ENCODE measurements at regions of chr12 and their contacts with region 1.

Region 1: DNA sequence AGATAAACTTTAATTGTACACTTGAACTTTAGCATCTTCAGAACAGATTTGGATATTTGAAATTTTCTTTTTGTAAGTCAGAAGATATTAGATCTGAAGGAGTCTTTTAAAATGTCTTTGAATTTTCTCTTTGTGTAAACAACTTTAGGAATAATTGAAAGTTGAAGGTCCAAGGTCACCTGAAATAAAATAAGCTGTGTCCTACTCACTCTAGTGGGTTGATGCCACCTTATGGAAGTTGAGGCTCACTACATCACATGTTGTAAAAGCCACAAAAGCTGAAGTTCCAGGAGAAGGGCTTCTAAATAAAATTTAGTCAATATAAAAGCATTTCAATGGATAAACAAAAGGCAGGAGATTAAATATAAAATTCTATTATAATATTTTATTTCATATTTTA is 122.0 kb upstream of the ATXN7L3B start:
- DNase-seq: peak; percentile 49
- ATAC-seq: peak; percentile 69
- H3K4me3 ChIP-seq: no peak overlapping the region
- H3K27ac ChIP-seq: no peak overlapping the region
- H3K4me1 ChIP-seq: peaks cover 0 to 3% of the 10 kb centered on the region in 2 experiments; a peak in 1 of 4 replicates
- H3K27me3 ChIP-seq: no peaks in the 10 kb centered on the region
- CTCF ChIP-seq: peak; percentile 60 to 67 (median 63); a peak in 5 of 6 replicates
- POLR2A ChIP-seq: no peak
- RAD21 ChIP-seq: peak; percentile 72

Region 2: DNA sequence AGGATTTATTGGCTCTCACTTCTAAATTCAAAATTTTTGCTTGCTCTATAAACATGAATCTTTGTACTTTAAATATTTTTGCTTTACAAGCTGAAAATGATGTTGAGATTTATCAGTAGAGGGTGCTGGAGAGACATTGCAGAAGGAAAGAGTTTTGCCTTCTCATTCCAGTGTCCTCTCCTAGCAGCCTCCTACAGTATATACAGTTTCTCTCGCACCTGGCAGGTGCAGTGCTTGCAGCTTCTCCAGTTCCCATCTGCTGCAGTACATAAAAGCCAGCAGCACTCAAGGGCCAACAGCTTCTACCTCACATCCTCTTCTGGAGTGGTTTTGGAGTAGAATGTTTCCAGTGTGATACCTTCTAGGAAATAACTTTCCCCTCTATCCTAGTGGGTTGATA is 479.8 kb before region 1 on chr12:
- CTCF ChIA-PET with region 1: interaction called, 20 read pairs
- POLR2A ChIA-PET with region 1: no interaction called
- RAD21 ChIA-PET with region 1: interaction called in 1 of 2 experiments, 3 read pairs
- intact Hi-C with region 1: loop called (anchors 1 kb)
- DNase-seq: peak; percentile 24
- ATAC-seq: peak; percentile 78
- H3K4me3 ChIP-seq: no peak overlapping the region
- H3K27ac ChIP-seq: no peak overlapping the region
- H3K4me1 ChIP-seq: no peaks in the 10 kb centered on the region
- H3K27me3 ChIP-seq: no peaks in the 10 kb centered on the region
- CTCF ChIP-seq: peak; percentile 37 to 54 (median 52); a peak in 4 of 6 replicates
- POLR2A ChIP-seq: no peak
- RAD21 ChIP-seq: peak; percentile 72

Region 3: DNA sequence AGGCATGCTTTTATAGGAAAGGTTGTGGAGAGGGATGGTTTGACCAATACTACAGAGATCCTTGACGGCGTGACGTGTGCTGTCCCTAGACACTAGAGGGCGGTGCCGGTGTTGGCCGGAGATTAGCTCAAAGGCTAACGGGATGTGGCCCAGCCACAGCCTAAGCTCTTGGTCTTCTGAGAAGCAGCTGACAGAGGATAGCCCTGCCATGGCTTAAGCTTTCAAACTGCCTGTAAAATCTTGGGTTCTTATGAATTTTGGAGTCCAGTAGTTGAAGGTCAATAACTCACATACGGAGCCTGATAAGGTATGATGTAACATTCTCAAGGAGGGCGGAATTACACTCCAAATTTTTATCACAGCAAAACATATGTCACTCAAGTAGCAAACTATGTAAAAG is 393.7 kb before region 1 on chr12:
- CTCF ChIA-PET with region 1: interaction called, 4 read pairs
- POLR2A ChIA-PET with region 1: no interaction called
- RAD21 ChIA-PET with region 1: interaction called in 1 of 2 experiments, 5 read pairs
- intact Hi-C with region 1: loop called (anchors 2 kb)
- DNase-seq: peak; percentile 68
- ATAC-seq: peak; percentile 100
- H3K4me3 ChIP-seq: no peak overlapping the region
- H3K27ac ChIP-seq: no peak overlapping the region
- H3K4me1 ChIP-seq: peaks cover 0 to 3% of the 10 kb centered on the region in 2 experiments; a peak in 2 of 4 replicates
- H3K27me3 ChIP-seq: no peaks in the 10 kb centered on the region
- CTCF ChIP-seq: peak; percentile 49 to 79 (median 77); a peak in 5 of 6 replicates
- POLR2A ChIP-seq: no peak
- RAD21 ChIP-seq: peak; percentile 75

Region 4: DNA sequence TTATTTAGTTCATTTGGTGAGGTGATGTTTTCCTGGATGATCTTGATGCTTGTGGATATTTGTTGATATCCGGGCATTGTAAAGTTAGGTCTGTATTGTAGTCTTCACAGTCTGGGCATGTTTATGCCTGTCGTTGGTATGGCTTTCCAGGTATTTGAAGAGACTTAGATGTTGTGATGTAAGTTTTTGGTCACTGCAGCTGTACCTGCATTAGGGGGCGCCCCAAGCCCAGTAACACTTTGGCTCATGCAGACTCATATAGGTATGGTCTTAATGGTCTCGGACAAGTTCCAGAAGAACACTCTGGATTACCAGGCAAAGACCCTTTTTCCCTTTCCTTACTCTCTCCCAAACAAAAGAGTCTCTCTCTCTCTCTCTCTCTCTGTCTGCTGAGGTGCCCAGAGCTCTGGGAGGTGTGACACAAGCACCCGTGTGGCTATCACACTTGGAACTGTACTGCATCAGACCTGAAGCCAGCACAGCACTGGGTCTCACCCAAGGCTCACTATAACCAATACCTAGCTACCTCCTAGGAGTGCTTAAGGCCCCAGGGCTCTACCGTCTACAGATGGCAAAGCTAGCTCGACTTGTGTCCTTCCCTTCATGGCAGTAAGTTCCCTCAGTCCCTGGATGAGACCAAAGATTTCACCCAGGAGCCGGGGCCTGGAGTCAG is 303.8 kb before region 1 on chr12:
- CTCF ChIA-PET with region 1: interaction called, 32 read pairs
- POLR2A ChIA-PET with region 1: no interaction called
- RAD21 ChIA-PET with region 1: interaction called in 1 of 2 experiments, 3 read pairs
- intact Hi-C with region 1: loop called (anchors 1 kb)
- DNase-seq: peak; percentile 52
- ATAC-seq: peak; percentile 97
- H3K4me3 ChIP-seq: no peak overlapping the region
- H3K27ac ChIP-seq: no peak overlapping the region
- H3K4me1 ChIP-seq: peaks cover 0 to 3% of the 10 kb centered on the region in 2 experiments; a peak in 1 of 4 replicates
- H3K27me3 ChIP-seq: no peaks in the 10 kb centered on the region
- CTCF ChIP-seq: peak; percentile 63 to 76 (median 76); a peak in 5 of 6 replicates
- POLR2A ChIP-seq: no peak
- RAD21 ChIP-seq: peak; percentile 86

Region 5: DNA sequence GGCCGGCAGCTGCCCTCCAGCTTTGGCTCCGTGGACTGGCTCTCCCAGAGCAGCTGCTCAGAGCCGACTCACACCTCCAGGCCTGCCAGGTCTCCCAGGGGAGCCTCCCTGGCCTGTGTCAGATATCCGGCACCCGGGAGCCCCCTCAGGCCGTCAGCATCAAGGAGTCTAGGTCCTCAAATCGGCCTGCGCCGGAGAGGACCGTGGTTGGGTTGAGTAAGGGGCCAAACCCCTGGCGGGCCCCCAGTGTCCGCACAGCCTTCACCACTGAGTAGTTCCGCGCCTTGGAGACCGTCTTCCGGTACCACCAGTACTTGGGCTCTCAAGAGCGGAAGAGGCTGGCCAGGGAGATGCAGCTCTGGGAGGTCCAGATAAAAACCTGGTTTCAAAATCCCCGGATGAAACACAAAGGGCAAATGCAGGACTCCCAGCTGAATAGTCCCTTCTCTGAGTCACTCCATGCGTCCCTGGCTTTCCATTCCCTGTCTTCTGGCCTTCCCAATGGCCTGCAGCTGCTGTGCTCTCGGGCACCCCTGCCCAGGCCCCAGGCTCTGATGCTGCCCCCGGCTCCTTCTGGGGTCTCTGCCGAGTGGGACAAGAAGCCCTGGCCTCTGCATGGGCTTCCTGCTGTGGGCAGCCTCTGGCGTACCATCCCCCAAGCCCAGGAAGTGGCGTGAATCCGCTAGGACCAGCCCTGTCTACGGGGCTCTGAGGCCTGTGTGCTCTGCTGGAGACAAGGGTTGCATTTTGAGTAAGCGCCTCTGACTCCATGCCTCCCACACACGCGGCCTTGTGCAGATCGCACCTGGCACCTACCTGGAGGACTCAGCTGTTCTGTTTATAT is 123.1 kb before region 1 on chr12:
- CTCF ChIA-PET with region 1: no interaction called
- POLR2A ChIA-PET with region 1: no interaction called
- RAD21 ChIA-PET with region 1: no interaction called
- intact Hi-C with region 1: no loop called
- DNase-seq: no peak
- ATAC-seq: no peak
- H3K4me3 ChIP-seq: no peak overlapping the region
- H3K27ac ChIP-seq: no peak overlapping the region
- H3K4me1 ChIP-seq: no peaks in the 10 kb centered on the region
- H3K27me3 ChIP-seq: no peaks in the 10 kb centered on the region
- CTCF ChIP-seq: no peak
- POLR2A ChIP-seq: no peak
- RAD21 ChIP-seq: no peak

Region 6: GRCh38 chr12:74483057-74483456 is 67.4 kb after region 1 on chr12:
- CTCF ChIA-PET with region 1: no interaction called
- POLR2A ChIA-PET with region 1: no interaction called
- RAD21 ChIA-PET with region 1: no interaction called
- intact Hi-C with region 1: no loop called
- DNase-seq: no peak
- ATAC-seq: no peak
- H3K4me3 ChIP-seq: no peak overlapping the region
- H3K27ac ChIP-seq: no peak overlapping the region
- H3K4me1 ChIP-seq: no peaks in the 10 kb centered on the region
- H3K27me3 ChIP-seq: no peaks in the 10 kb centered on the region
- CTCF ChIP-seq: no peak
- POLR2A ChIP-seq: no peak
- RAD21 ChIP-seq: no peak

Region 7: GRCh38 chr12:74537707-74538385 is 122.2 kb after region 1 on chr12 and contains the start of gene ATXN7L3B:
- CTCF ChIA-PET with region 1: interaction called, 3 read pairs
- POLR2A ChIA-PET with region 1: no interaction called
- RAD21 ChIA-PET with region 1: no interaction called
- intact Hi-C with region 1: loop called (anchors 5 kb)
- DNase-seq: peak; percentile 87
- ATAC-seq: peak; percentile 99
- H3K4me3 ChIP-seq: peak within 1 kb of the TSS; percentile 88 to 97
- H3K27ac ChIP-seq: peak within 1 kb of the TSS; percentile 81
- H3K4me1 ChIP-seq: peaks cover 10 to 18% of the 10 kb centered on the region in 2 experiments; a peak in 3 of 4 replicates
- H3K27me3 ChIP-seq: no peaks in the 10 kb centered on the region
- CTCF ChIP-seq: 0 out of 6 replicates have a peak, but pooled peaks of 1 of the 3 experiments have one; percentile 18
- POLR2A ChIP-seq: peak; percentile 54
- RAD21 ChIP-seq: no peak
- total RNA-seq, gene ATXN7L3B: 28.1 TPM

Region 8: GRCh38 chr12:74646831-74647230 is 231.2 kb after region 1 on chr12:
- CTCF ChIA-PET with region 1: interaction called, 17 read pairs
- POLR2A ChIA-PET with region 1: no interaction called
- RAD21 ChIA-PET with region 1: no interaction called
- intact Hi-C with region 1: loop called (anchors 10 kb)
- DNase-seq: peak; percentile 37
- ATAC-seq: peak; percentile 64
- H3K4me3 ChIP-seq: no peak overlapping the region
- H3K27ac ChIP-seq: no peak overlapping the region
- H3K4me1 ChIP-seq: no peaks in the 10 kb centered on the region
- H3K27me3 ChIP-seq: no peaks in the 10 kb centered on the region
- CTCF ChIP-seq: peak; percentile 30 to 57 (median 49); a peak in 4 of 6 replicates
- POLR2A ChIP-seq: no peak
- RAD21 ChIP-seq: peak; percentile 79